ENCODE measurements at regions of chr3 and their contacts with region 1.

Region 1: GRCh38 chr3:49906004-49906743 is 2.5 kb upstream of the MST1R start:
- DNase-seq: peak; percentile 33
- ATAC-seq: peak; percentile 75
- H3K4me3 ChIP-seq: peak overlapping the region; percentile 8 to 40 (median 39); a peak in 5 of 6 replicates
- H3K27ac ChIP-seq: no peak overlapping the region
- H3K4me1 ChIP-seq: peaks cover 24% of the 10 kb centered on the region
- H3K27me3 ChIP-seq: no peaks in the 10 kb centered on the region
- CTCF ChIP-seq: peak; percentile 91
- EP300 ChIP-seq: no peak
- POLR2A ChIP-seq: no peak
- RAD21 ChIP-seq: peak; percentile 89

Region 2: DNA sequence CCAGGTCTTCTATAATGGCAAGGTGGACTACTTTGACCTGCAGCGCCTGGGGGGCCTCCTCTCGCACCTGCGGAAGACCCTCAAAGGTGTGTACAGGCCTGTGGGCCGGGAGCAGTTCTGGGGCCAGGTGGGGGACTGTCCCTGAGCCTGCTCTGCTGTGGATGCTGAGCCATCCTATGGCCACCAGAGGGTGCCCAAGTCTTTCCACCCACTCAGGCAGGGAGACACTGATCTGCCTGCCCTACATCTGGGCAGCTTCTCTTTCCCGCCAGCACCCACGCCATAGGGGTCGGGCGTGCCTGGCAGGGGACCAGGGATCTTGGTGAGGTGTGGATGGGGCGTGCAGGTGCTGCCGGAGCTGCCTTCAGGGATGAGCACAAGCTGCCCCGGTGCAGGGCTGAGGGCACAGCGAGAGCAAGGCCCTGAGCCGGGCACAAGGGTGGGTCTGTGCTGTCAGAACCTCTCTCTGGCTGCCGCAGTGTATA is 202.7 kb before region 1 on chr3:
- CTCF ChIA-PET with region 1: interaction called, 7 read pairs
- POLR2A ChIA-PET with region 1: no interaction called
- in situ Hi-C with region 1: loop called (anchors 5 kb)
- intact Hi-C with region 1: loop called (anchors 2 kb)
- DNase-seq: peak; percentile 60
- ATAC-seq: peak; percentile 87
- H3K4me3 ChIP-seq: no peak overlapping the region
- H3K27ac ChIP-seq: no peak overlapping the region
- H3K4me1 ChIP-seq: no peaks in the 10 kb centered on the region
- H3K27me3 ChIP-seq: no peaks in the 10 kb centered on the region; a peak in 1 of 5 replicates
- CTCF ChIP-seq: peak; percentile 95
- EP300 ChIP-seq: no peak
- POLR2A ChIP-seq: no peak
- RAD21 ChIP-seq: peak; percentile 85

Region 3: DNA sequence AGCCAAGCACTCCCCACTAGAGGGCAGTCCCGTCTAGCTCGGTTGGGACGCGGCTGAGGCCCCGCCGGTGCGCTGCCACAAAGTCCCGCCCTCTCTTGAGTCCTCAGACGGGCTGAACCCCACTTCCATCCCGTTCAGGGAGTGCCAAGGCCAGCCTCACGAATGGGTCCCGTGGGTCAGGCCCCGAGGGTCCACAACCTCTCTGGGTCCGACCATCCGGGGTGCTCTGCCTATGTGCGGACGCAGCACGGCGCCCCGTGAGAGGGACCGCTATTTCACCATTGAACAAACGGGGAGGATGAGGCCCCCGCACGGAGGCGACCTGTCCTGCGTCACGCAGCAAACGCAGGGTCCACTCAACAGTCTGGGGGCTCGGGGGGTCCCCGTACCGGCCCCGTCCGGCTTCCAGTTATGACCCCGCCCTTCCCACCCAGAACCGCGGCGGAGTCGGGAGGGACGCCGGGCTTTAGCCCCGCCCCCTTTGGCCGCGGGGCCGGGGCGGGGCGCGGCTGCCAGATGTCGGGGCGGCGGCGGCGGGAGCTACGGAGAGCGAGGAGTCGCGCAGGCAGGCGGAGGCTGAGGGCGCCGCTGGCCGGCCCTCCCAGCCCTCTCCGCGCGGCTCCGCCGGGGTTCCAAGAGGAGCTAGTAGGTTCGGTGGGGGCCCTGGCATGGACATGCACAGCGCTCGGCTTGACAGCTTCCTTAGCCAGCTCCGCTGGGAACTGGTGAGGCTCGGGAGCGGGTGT is 103.3 kb before region 1 on chr3 and contains the start of gene INKA1:
- CTCF ChIA-PET with region 1: interaction called, 6 read pairs
- POLR2A ChIA-PET with region 1: interaction called, 3 read pairs
- in situ Hi-C with region 1: loop called (anchors 10 kb)
- intact Hi-C with region 1: loop called (anchors 1 kb)
- DNase-seq: peak; percentile 75
- ATAC-seq: peak; percentile 77
- H3K4me3 ChIP-seq: peak within 1 kb of the TSS; percentile 73 to 89 (median 85)
- H3K27ac ChIP-seq: no peak within 1 kb of the TSS
- H3K4me1 ChIP-seq: peaks cover 78% of the 10 kb centered on the region
- H3K27me3 ChIP-seq: peaks cover 0 to 12% of the 10 kb centered on the region in 2 experiments; a peak in 3 of 5 replicates
- CTCF ChIP-seq: peak; percentile 100
- EP300 ChIP-seq: no peak
- POLR2A ChIP-seq: no peak
- RAD21 ChIP-seq: peak; percentile 98
- total RNA-seq, gene INKA1: 0.22 TPM in 1 of 2 replicates, not detected in the other

Region 4: GRCh38 chr3:49839193-49839809 is 66.9 kb before region 1 on chr3:
- CTCF ChIA-PET with region 1: interaction called, 8 read pairs
- POLR2A ChIA-PET with region 1: no interaction called
- in situ Hi-C with region 1: loop called (anchors 5 kb)
- intact Hi-C with region 1: loop called (anchors 2 kb)
- DNase-seq: peak; percentile 63
- ATAC-seq: peak; percentile 81
- H3K4me3 ChIP-seq: no peak overlapping the region
- H3K27ac ChIP-seq: no peak overlapping the region
- H3K4me1 ChIP-seq: peaks cover 30% of the 10 kb centered on the region
- H3K27me3 ChIP-seq: no peaks in the 10 kb centered on the region
- CTCF ChIP-seq: peak; percentile 90
- EP300 ChIP-seq: no peak
- POLR2A ChIP-seq: no peak
- RAD21 ChIP-seq: peak; percentile 78

Region 5: DNA sequence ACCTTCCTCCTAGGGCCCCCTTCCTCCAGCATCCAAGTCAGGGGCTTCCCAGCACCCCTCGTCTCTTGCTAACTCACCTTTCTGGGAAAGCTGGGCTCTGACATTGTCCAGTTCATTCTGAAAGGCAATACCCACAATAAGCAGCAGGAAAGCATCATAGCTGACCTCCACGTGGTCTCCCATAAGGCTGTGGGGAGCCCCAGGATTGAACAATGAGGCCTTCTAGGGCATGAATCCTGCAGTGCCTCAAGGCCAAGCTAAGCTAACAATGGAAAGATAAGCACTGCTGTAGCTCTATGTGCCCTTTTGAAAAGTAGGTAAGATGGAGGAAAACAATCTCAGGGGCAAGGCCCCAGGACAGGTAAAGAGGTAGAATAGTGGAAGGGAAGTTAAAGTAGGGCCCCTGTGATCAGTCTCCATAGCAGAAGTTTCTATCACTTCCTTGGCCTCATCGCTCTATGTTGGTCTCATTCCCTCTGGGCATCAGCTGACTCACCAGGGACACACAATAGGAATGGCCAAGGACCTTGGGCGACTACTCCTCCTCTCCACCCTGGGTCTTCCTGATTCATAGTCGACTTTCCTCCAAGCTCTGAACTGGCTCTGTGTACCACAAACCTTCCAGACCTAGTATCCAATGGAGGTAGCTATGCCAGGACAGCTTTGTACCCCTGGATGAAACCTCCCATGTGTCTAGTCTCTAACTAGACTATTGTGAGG is 61.5 kb before region 1 on chr3:
- CTCF ChIA-PET with region 1: interaction called, 8 read pairs
- POLR2A ChIA-PET with region 1: no interaction called
- in situ Hi-C with region 1: loop called (anchors 5 kb)
- intact Hi-C with region 1: loop called (anchors 2 kb)
- DNase-seq: peak; percentile 89
- ATAC-seq: peak; percentile 85
- H3K4me3 ChIP-seq: no peak overlapping the region
- H3K27ac ChIP-seq: peak overlapping the region; percentile 75
- H3K4me1 ChIP-seq: peaks cover 54% of the 10 kb centered on the region
- H3K27me3 ChIP-seq: no peaks in the 10 kb centered on the region
- CTCF ChIP-seq: no peak
- EP300 ChIP-seq: peak in 1 of 2 experiments; percentile 50; a peak in 2 of 4 replicates
- POLR2A ChIP-seq: no peak
- RAD21 ChIP-seq: no peak

Measured in HepG2 (cell line).